ENCODE measurements at regions of chr1 and their contacts with region 1.

Region 1: GRCh38 chr1:62841587-62842169 is 57.7 kb downstream of the ATG4C start:
- ATAC-seq: peak; percentile 48 to 72 (median 61)
- H3K4me3 ChIP-seq: no peak overlapping the region
- H3K27ac ChIP-seq: no peak overlapping the region
- H3K4me1 ChIP-seq: peaks cover 0 to 3% of the 10 kb centered on the region in 2 donors

Region 2: GRCh38 chr1:62989497-62989896 is 147.8 kb after region 1 on chr1:
- in situ Hi-C with region 1: loop called in 1 of 9 experiments (anchors 25 kb)
- ATAC-seq: peak in 2 of 8 experiments; percentile 20 to 64
- H3K4me3 ChIP-seq: no peak overlapping the region
- H3K27ac ChIP-seq: no peak overlapping the region
- H3K4me1 ChIP-seq: no peaks in the 10 kb centered on the region

Region 3: GRCh38 chr1:63148825-63149645 is 307.4 kb after region 1 on chr1:
- in situ Hi-C with region 1: loop called in 1 of 9 experiments (anchors 25 kb)
- ATAC-seq: peak in 5 of 8 experiments; percentile 21 to 81 (median 69)
- H3K4me3 ChIP-seq: no peak overlapping the region
- H3K27ac ChIP-seq: no peak overlapping the region
- H3K4me1 ChIP-seq: no peaks in the 10 kb centered on the region